ENCODE measurements at regions of chr17 and their contacts with region 1.

Region 1: DNA sequence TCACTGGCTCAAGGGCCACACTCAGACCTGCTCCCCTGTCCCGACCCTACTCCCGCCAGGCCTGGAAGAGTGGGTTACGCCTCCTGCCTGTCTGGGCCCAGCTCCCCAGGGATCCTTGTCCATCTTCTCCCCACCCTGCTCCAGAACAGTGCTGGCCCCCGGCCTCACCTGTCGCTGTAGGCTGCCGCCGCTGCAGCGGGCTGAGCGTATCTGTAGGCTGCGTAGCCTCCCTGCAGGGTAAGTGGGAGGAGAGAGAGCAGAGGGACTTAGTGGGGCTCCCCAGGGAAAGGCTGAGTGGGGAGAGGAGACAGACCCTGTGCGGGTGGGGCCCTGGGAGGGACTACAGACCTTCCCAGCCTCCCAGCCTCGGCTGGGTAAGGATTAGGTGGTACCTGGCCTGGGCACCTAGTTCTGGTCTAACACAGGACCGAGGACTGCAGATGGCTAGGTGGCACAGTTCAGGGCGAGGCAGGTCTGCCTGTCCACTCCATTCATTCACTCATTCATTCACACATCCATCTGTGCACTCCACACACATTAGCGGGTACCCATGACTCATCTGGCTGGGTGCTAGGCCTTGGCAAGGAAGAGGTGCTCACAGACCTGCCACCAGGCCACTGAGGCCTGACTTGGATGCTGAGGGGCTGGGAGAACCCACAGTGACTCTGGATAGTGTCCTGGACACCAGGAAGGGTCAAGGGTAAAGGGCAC is 20.9 kb downstream of the ENGASE start:
- DNase-seq: no peak
- H3K4me3 ChIP-seq: no peak overlapping the region
- H3K27ac ChIP-seq: no peak overlapping the region
- H3K4me1 ChIP-seq: no peaks in the 10 kb centered on the region; a peak in 1 of 4 replicates
- H3K27me3 ChIP-seq: peaks cover 40% of the 10 kb centered on the region
- CTCF ChIP-seq: no peak
- EP300 ChIP-seq: no peak
- RAD21 ChIP-seq: no peak

Region 2: GRCh38 chr17:79109570-79109969 is 14.1 kb after region 1 on chr17:
- CTCF ChIA-PET with region 1: interaction called, 364 read pairs
- POLR2A ChIA-PET with region 1: no interaction called
- DNase-seq: peak; percentile 79
- H3K4me3 ChIP-seq: no peak overlapping the region
- H3K27ac ChIP-seq: no peak overlapping the region
- H3K4me1 ChIP-seq: peaks cover 0 to 15% of the 10 kb centered on the region in 2 experiments; a peak in 1 of 4 replicates
- H3K27me3 ChIP-seq: peaks cover 17% of the 10 kb centered on the region; the same call in 1 of the 2 replicates
- CTCF ChIP-seq: peak; percentile 48
- EP300 ChIP-seq: no peak
- RAD21 ChIP-seq: peak; percentile 51

Region 3: GRCh38 chr17:79114458-79115301 is 19.2 kb after region 1 on chr17:
- CTCF ChIA-PET with region 1: interaction called, 364 read pairs
- POLR2A ChIA-PET with region 1: no interaction called
- DNase-seq: peak; percentile 97
- H3K4me3 ChIP-seq: no peak overlapping the region; a peak in 1 of 4 replicates
- H3K27ac ChIP-seq: peak overlapping the region in 1 of 2 experiments; percentile 40; a peak in 1 of 4 replicates
- H3K4me1 ChIP-seq: peaks cover 0 to 27% of the 10 kb centered on the region in 2 experiments; a peak in 1 of 4 replicates
- H3K27me3 ChIP-seq: peaks cover 35% of the 10 kb centered on the region
- CTCF ChIP-seq: no peak
- EP300 ChIP-seq: peak in 1 of 2 experiments; percentile 59; a peak in 2 of 4 replicates
- RAD21 ChIP-seq: no peak; the same call in 1 of the 2 replicates

Measured in SK-N-SH (cell line).